GM12878 (cell line): ENCODE measurements at regions of chr12 and their contacts with region 1.

Region 1: DNA sequence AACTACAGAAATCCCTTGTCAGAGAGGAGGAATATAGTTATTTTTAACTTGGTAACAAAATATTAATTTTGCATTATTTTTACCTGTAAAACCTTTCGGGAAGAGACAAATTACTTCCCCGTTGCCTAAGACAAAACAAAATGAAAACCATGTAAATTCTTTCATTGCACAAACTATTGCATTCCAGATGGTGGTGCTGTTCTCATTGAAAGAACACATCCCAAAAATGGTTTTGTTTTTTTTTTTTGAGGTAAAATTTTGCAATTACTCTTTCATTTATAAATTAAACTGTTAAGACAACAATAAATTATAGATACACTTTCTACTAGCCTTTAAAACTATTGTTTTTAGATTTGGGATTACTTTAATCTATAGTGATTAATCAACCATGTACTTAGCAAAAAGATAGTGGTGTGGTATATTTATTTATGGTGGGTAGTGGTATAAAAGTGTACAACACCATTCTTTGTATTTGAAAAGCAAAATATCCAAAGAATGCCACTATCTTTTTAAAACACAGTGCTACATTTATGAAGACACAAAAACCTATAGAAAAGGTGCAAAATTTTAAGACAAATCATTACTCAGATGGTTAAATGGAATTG is 115.5 kb downstream of the SLC38A1 start:
- DNase-seq: no peak
- ATAC-seq: peak; percentile 56
- H3K4me3 ChIP-seq: no peak overlapping the region
- H3K27ac ChIP-seq: no peak overlapping the region
- H3K4me1 ChIP-seq: no peaks in the 10 kb centered on the region
- H3K27me3 ChIP-seq: no peaks in the 10 kb centered on the region
- CTCF ChIP-seq: peak; percentile 59 to 76 (median 64); a peak in 5 of 6 replicates
- EP300 ChIP-seq: no peak
- POLR2A ChIP-seq: no peak
- RAD21 ChIP-seq: peak; percentile 93

Region 2: GRCh38 chr12:46100855-46101484 is 52.4 kb before region 1 on chr12:
- CTCF ChIA-PET with region 1: no interaction called
- POLR2A ChIA-PET with region 1: no interaction called
- RAD21 ChIA-PET with region 1: no interaction called
- SMC1A ChIA-PET with region 1: no interaction called
- in situ Hi-C with region 1: no loop called
- intact Hi-C with region 1: no loop called
- DNase-seq: no peak
- ATAC-seq: no peak
- H3K4me3 ChIP-seq: no peak overlapping the region
- H3K27ac ChIP-seq: no peak overlapping the region
- H3K4me1 ChIP-seq: no peaks in the 10 kb centered on the region
- H3K27me3 ChIP-seq: no peaks in the 10 kb centered on the region
- CTCF ChIP-seq: no peak
- EP300 ChIP-seq: no peak
- POLR2A ChIP-seq: no peak
- RAD21 ChIP-seq: no peak

Region 3: DNA sequence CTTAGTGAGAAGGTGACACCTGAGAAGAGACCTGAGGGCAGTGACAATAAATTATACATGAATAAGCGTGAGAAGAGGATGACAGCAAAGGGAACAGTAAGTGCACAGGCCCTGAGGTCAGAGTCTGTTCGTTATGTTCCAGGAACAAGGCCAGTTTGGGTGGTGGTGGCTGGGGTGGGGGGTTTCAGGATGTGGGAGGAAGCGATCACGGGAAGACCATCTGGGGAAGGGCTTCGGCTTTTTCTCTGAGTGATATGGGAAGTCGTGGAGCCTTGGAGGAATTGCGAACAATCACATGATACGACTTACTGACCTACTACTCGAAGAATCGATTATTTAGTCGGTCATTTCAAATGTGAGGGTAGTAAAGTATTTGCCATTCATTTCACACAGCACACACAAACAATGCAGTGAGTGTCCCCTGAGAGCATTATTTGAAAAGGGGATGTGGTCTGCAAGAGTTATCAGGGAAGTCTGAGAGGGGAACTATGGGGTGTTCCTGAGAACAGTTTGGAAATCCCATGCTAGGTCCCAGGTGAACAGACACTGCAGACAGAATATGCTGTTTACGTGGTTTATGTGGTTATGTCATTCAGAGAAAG is 20.8 kb after region 1 on chr12:
- CTCF ChIA-PET with region 1: interaction called, 30 read pairs
- POLR2A ChIA-PET with region 1: interaction called, 4 read pairs
- RAD21 ChIA-PET with region 1: interaction called, 14 read pairs
- SMC1A ChIA-PET with region 1: interaction called, 35 read pairs
- in situ Hi-C with region 1: no loop called
- intact Hi-C with region 1: loop called (anchors 2 kb)
- DNase-seq: peak; percentile 85
- ATAC-seq: peak; percentile 57
- H3K4me3 ChIP-seq: no peak overlapping the region; the same call in 1 of the 2 replicates
- H3K27ac ChIP-seq: peak overlapping the region; percentile 21
- H3K4me1 ChIP-seq: peaks cover 25% of the 10 kb centered on the region
- H3K27me3 ChIP-seq: no peaks in the 10 kb centered on the region
- CTCF ChIP-seq: no peak
- EP300 ChIP-seq: peak in 1 of 2 experiments; percentile 76; a peak in 2 of 4 replicates
- POLR2A ChIP-seq: no peak
- RAD21 ChIP-seq: no peak

Region 4: DNA sequence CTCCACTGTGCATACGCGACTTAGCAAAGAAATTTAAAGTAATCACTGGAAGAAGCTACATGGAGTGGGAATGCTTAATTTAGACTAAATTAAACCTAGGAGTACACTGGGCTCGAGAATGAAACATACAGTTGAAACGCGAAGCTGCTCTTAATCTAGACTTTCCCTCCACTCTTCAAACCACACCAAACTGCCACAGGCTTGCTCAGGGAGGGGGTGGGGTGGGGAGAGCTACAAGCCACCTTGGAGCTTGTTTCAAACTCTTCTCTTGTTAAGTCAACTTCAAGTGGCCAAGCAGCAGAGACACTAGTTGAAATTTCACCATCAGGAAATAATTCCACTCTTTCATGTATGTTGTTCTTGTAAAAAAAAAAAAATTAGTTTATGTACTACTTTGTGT is 45.5 kb after region 1 on chr12:
- CTCF ChIA-PET with region 1: interaction called, 3 read pairs
- POLR2A ChIA-PET with region 1: no interaction called
- RAD21 ChIA-PET with region 1: interaction called, 4 read pairs
- SMC1A ChIA-PET with region 1: interaction called, 11 read pairs
- in situ Hi-C with region 1: no loop called
- intact Hi-C with region 1: no loop called
- DNase-seq: no peak
- ATAC-seq: no peak
- H3K4me3 ChIP-seq: no peak overlapping the region
- H3K27ac ChIP-seq: no peak overlapping the region
- H3K4me1 ChIP-seq: no peaks in the 10 kb centered on the region
- H3K27me3 ChIP-seq: no peaks in the 10 kb centered on the region
- CTCF ChIP-seq: no peak
- EP300 ChIP-seq: no peak
- POLR2A ChIP-seq: no peak
- RAD21 ChIP-seq: no peak

Region 5: DNA sequence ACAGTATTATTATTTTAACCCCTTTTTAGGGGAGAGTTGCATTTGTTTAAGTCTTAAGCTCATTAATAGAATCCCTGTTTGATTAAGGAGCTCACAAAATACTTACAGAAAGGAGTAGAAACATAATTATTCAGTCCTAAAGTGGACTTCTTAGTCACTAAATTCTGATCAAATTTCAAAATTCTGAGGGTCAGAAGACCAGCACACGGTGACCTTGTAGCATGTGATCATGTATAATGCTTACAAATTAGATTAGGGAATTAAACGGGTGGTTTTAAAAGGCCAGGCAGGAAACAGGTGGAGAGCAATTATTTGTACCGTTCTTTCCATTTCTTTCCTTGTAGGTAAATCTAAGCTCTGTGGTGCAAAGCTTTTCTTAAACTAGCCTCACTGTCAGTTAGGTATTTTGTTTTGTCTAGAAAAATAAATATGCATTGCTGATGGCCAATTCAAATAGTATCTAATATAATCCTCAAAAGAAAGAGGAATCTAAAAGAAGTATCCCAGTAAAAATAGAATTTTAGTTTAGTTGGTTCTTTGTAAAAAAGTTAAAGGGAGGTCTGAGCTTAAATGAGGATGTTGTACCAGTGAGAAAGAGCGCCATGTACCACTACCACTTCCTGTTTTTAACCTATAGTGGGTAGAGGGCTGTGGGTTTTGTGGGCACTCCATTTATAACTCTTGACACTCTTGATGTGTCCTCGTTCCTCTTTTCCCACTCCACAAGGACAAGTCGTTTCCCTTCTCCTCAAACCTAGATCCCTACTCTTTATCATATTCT is 64.4 kb after region 1 on chr12:
- CTCF ChIA-PET with region 1: interaction called, 12 read pairs
- POLR2A ChIA-PET with region 1: interaction called, 4 read pairs
- RAD21 ChIA-PET with region 1: interaction called, 17 read pairs
- SMC1A ChIA-PET with region 1: interaction called, 30 read pairs
- in situ Hi-C with region 1: no loop called
- intact Hi-C with region 1: loop called (anchors 2 kb)
- DNase-seq: peak; percentile 90
- ATAC-seq: peak; percentile 71
- H3K4me3 ChIP-seq: peak overlapping the region; percentile 44; the same call in 1 of the 2 replicates
- H3K27ac ChIP-seq: peak overlapping the region; percentile 87
- H3K4me1 ChIP-seq: peaks cover 62% of the 10 kb centered on the region
- H3K27me3 ChIP-seq: no peaks in the 10 kb centered on the region
- CTCF ChIP-seq: no peak
- EP300 ChIP-seq: peak; percentile 95 to 97
- POLR2A ChIP-seq: no peak
- RAD21 ChIP-seq: no peak

Region 6: GRCh38 chr12:46303039-46303666 is 149.8 kb after region 1 on chr12:
- CTCF ChIA-PET with region 1: interaction called, 40 read pairs
- POLR2A ChIA-PET with region 1: interaction called, 3 read pairs
- RAD21 ChIA-PET with region 1: interaction called, 30 read pairs
- SMC1A ChIA-PET with region 1: interaction called, 42 read pairs
- in situ Hi-C with region 1: no loop called
- intact Hi-C with region 1: loop called (anchors 2 kb)
- DNase-seq: peak; percentile 2
- ATAC-seq: peak; percentile 91
- H3K4me3 ChIP-seq: no peak overlapping the region
- H3K27ac ChIP-seq: no peak overlapping the region
- H3K4me1 ChIP-seq: no peaks in the 10 kb centered on the region
- H3K27me3 ChIP-seq: no peaks in the 10 kb centered on the region; a peak in 1 of 4 replicates
- CTCF ChIP-seq: peak; percentile 54 to 58 (median 57)
- EP300 ChIP-seq: no peak
- POLR2A ChIP-seq: no peak
- RAD21 ChIP-seq: peak; percentile 66

Region 7: GRCh38 chr12:46382964-46383653 is 229.7 kb after region 1 on chr12:
- CTCF ChIA-PET with region 1: no interaction called
- POLR2A ChIA-PET with region 1: no interaction called
- RAD21 ChIA-PET with region 1: no interaction called
- SMC1A ChIA-PET with region 1: no interaction called
- in situ Hi-C with region 1: no loop called
- intact Hi-C with region 1: loop called (anchors 5 kb)
- DNase-seq: peak; percentile 81
- ATAC-seq: peak; percentile 80
- H3K4me3 ChIP-seq: peak overlapping the region; percentile 80
- H3K27ac ChIP-seq: peak overlapping the region; percentile 89
- H3K4me1 ChIP-seq: peaks cover 23% of the 10 kb centered on the region
- H3K27me3 ChIP-seq: no peaks in the 10 kb centered on the region
- CTCF ChIP-seq: peak; percentile 19 to 39 (median 34); a peak in 4 of 6 replicates
- EP300 ChIP-seq: no peak; a peak in 2 of 4 replicates
- POLR2A ChIP-seq: peak; percentile 81
- RAD21 ChIP-seq: peak; percentile 39